ENCODE measurements at regions of chr16 and their contacts with region 1.

Region 1: DNA sequence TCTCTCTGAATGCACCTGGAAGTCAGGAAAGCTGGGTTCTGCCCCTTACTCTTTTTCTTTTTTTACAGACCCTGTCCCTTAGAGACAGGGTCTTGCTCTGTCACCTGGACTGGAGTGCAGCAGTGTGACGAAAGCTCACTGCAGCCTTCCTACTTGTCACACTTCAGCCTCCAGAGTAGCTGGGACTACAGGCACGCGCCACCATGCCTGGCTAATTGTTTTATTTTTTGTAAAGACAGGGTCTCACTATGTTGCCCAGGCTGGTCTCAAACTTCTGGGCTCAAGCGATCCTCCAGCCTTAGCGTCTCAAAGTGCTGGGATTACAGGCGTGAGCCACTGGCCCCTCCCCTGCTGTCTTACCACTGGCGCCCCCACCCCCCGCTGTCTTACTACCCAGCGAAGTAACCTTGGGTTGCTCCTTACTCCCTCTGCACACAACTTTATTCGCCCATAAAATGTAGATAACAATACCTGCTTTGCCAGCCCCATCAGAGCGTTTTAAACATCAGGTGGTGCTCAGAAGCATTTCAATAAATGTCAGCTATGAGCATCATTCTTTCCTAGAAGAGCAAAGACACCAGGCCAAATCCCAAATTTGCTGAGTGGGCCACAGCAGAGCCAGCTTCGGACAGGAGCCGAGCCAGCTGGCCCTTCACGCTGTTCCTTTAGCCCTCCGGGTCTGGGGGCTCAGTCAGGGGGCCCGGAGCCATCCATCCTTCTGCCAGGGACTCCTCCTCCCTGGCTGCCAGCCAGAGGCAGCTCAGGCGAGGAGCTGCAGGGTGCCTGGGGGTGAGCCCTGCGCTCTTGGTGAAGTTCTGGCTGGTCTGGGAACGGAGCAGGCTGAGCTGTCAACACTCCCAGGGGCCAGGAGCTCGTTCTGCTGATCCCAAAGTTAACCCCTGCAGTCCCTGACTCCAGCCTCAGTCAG is 24.4 kb downstream of the SRL start:
- DNase-seq: peak; percentile 79
- ATAC-seq: peak; percentile 87

Region 2: GRCh38 chr16:2459647-2460390 is 1757.6 kb before region 1 on chr16 and contains the start of gene TEDC2:
- intact Hi-C with region 1: no loop called
- DNase-seq: peak; percentile 98
- ATAC-seq: peak; percentile 98
- total RNA-seq, gene TEDC2: 0.95 TPM

Region 3: GRCh38 chr16:4232541-4233386 is 15.3 kb after region 1 on chr16:
- intact Hi-C with region 1: loop called (anchors 2 kb)
- DNase-seq: no peak
- ATAC-seq: peak; percentile 59

Region 4: GRCh38 chr16:4240624-4241023 is 23.2 kb after region 1 on chr16:
- intact Hi-C with region 1: loop called (anchors 2 kb)
- DNase-seq: peak; percentile 76
- ATAC-seq: peak; percentile 79

Measured in Right ventricle myocardium inferior (tissue), 1 donor.